Common myeloid progenitor, CD34-positive (primary cell): ENCODE measurements at regions of chr12 and their contacts with region 1.

Region 1: DNA sequence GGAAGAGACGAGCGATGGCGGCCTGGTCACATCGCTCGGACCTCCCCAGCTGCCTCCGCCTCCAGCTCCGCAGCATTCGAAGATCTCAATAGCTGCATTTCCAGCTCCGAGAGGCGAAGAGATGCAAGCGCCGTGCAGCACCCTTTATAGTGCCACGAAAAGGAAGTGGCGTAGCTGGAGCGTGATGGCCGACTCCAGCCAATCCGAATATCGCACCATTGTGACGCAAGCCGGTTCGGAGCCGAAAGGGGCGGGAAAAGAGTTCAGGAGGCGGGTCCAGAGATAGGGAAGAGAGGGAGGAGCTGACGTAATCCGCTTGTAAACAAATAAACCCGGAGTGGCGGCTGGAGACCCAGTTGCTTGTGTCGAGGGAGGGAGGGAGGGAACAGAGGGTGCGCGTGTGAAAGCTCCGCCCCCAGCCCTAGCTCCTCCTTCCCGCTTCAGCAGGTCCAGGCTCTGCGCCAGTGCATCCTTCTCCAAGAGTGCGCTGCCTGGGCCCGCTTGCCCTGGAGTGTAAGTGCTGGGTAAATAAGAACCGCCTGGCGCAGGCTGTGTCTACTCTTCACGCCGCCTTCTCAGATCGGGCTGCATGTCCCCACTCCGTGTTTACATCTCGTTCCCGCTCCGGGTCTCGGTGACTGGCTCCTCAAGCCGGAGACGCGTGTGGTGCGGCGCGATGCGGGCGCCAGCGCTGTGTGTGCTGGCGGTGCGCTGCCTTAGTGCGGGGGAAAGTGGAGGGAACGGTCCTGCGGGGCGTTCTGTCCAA is at the start of gene BTG1:
- DNase-seq: peak; percentile 99 to 100 (median 100)
- H3K4me3 ChIP-seq: peak within 1 kb of the TSS; percentile 78 to 97 (median 96)
- H3K27ac ChIP-seq: peak within 1 kb of the TSS; percentile 74 to 91
- H3K4me1 ChIP-seq: peaks cover 29 to 50% (median 39%) of the 10 kb centered on the region in 4 experiments
- H3K27me3 ChIP-seq: no peaks in the 10 kb centered on the region

Region 2: DNA sequence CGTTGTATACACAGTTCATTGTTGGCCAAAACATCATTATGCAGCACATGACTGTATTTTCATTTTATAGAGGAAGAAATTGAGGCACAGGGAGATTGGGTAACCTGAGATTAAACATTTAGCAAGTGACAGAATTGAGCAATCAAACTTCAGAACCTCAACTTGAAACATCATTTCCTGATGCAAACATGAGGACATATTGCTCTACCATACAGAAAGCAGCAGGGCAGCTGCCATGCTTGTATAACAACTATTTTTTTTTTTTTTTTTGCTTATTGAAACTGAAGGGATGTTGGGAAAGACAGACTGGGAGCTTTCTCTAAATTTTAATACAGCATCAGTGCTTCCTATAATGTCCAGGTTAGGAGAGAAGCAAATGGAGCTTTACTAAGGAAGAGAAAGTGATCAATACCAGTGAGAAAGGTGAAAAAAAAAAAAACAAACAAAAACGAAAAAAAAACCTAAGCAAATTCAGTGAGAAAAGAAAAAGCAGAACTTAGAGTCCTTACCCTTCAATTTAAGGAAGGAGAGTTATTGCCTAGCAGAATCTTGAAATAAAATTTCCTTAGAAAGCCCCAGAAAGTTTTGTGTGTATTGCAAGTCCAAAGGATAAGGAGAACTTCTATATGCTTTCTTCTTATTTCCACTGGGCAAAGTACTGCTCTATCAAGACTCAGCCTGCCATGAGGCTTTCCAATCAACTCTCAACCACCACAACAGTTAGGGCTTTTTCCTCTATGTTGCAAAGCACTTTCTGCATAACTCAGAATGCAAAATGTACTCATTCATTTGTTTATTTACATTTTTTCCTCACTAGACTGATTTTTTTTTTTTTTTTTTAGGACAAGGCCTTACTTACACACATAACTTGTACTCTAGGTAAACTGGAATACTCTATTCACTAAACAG is 21.9 kb before region 1 on chr12:
- CTCF ChIA-PET with region 1: no interaction called
- POLR2A ChIA-PET with region 1: no interaction called
- DNase-seq: peak in 2 of 3 donors; percentile 53 to 60
- H3K4me3 ChIP-seq: no peak overlapping the region
- H3K27ac ChIP-seq: no peak overlapping the region
- H3K4me1 ChIP-seq: peaks cover 0 to 15% (median 5%) of the 10 kb centered on the region in 4 experiments
- H3K27me3 ChIP-seq: no peaks in the 10 kb centered on the region

Region 3: DNA sequence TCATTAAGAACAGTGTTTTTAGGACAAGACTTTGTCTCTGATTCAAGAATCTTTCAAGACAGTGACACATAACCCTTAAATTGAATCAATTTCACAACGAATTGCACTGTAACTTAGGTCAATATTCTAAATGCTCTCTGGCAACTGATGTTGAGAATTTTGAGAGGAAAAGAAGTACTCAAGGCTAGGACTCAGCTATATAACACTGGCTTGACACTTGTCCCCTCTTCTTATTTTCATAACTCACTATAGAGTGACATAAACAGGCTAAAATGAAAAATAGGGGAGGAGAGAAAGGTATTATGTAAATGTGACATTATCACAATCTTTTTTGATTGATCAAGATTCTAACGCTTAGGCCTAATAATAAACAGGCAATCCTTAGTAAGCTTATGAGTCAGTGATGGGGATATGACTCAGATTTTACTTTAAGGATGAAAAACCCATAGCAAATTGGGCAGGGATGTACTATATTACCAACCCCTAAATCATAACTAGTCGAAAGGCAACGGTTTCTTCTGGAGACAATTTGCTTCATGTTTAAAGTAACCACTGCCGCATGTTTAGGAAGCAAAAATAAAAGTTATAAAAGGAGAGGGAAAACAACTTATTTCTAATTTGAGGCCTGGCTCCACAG is 11.2 kb before region 1 on chr12:
- CTCF ChIA-PET with region 1: interaction called, 11 read pairs
- POLR2A ChIA-PET with region 1: interaction called, 3 read pairs
- DNase-seq: no peak
- H3K4me3 ChIP-seq: no peak overlapping the region
- H3K27ac ChIP-seq: peak overlapping the region in 1 of 2 experiments; percentile 3
- H3K4me1 ChIP-seq: peaks cover 13 to 37% (median 26%) of the 10 kb centered on the region in 4 experiments
- H3K27me3 ChIP-seq: no peaks in the 10 kb centered on the region

Region 4: GRCh38 chr12:92539113-92539749 is 393.3 kb after region 1 on chr12:
- CTCF ChIA-PET with region 1: no interaction called
- POLR2A ChIA-PET with region 1: interaction called, 10 read pairs
- DNase-seq: peak; percentile 76 to 89 (median 83)
- H3K4me3 ChIP-seq: peak overlapping the region in 1 of 7 experiments; percentile 9
- H3K27ac ChIP-seq: peak overlapping the region in 1 of 2 experiments; percentile 26
- H3K4me1 ChIP-seq: peaks cover 24 to 68% (median 55%) of the 10 kb centered on the region in 4 experiments
- H3K27me3 ChIP-seq: no peaks in the 10 kb centered on the region